Heart left ventricle (tissue), 16 donors: ENCODE measurements at regions of chr5 and their contacts with region 1.

Region 1: GRCh38 chr5:127875235-127876021 is 172.2 kb downstream of the CCDC192 start:
- DNase-seq: peak; percentile 40 to 80 (median 61)
- ATAC-seq: peak; percentile 83 to 95 (median 93)
- H3K4me3 ChIP-seq: no peak overlapping the region
- H3K27ac ChIP-seq: peak overlapping the region; percentile 18 to 86 (median 68)
- H3K4me1 ChIP-seq: peaks cover 3 to 43% (median 21%) of the 10 kb centered on the region in 12 donors
- H3K27me3 ChIP-seq: no peaks in the 10 kb centered on the region
- CTCF ChIP-seq: peak in 11 of 12 donors; percentile 11 to 54 (median 31)
- POLR2A ChIP-seq: no peak

Region 2: GRCh38 chr5:128498844-128499455 is 623.5 kb after region 1 on chr5:
- intact Hi-C with region 1: loop called in 1 of 10 experiments (anchors 10 kb)
- DNase-seq: peak in 1 of 5 donors; percentile 17
- ATAC-seq: peak in 2 of 4 donors; percentile 50 to 61
- H3K4me3 ChIP-seq: no peak overlapping the region
- H3K27ac ChIP-seq: no peak overlapping the region
- H3K4me1 ChIP-seq: peaks cover 0 to 4% (median 0%) of the 10 kb centered on the region in 12 donors
- H3K27me3 ChIP-seq: no peaks in the 10 kb centered on the region
- CTCF ChIP-seq: peak; percentile 27 to 72 (median 58)
- POLR2A ChIP-seq: no peak